ENCODE measurements at regions of chr7 and their contacts with region 1.

Region 1: DNA sequence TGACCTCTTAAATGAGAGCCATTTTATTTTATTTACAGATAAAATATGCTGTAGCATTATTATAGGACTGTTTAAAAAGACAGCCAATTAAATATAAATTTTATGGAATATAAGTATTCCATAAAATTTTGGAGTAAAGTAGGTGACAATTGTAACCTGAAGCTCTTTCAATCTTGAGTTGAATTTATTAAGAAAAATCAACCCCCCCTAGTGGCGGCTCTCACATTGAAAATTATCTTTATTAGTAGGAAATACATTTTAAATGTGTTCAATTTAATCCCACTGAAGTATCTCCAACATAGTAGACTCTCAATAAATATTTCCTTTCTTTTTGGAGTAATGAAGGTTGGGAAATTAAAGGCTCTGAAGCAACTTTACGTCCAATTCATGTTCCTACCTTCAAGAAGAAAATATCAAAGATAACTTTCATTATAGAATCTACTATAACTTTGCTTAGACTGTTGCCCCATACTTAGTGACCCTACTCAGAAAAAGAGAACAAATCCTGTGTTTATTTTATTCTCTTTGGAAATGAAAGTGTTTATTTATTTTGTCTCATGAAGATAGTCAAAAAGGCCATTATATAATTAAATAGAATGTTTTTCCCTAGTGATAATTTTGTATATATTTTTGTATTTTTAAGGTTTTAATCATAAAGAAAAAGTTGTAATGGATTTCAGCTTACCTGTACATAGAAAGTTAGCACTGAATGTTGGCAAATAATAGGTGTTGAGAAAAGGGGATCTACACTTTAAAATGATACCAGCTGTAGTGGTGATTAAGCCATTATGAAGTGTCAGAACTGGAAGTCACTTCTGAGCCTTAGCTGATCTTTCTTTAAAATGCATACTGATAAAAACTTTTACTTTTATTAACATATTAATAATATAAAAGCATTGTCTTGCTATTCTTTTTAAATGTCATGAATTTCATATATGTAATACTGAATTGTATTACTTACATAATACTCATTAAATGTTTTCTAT is 3.3 kb downstream of the AHR start:
- DNase-seq: no peak
- H3K4me3 ChIP-seq: no peak overlapping the region; a peak in 1 of 4 replicates
- H3K27ac ChIP-seq: no peak overlapping the region
- H3K4me1 ChIP-seq: peaks cover 4 to 8% of the 10 kb centered on the region in 2 experiments; a peak in 2 of 4 replicates
- H3K27me3 ChIP-seq: peaks cover 52% of the 10 kb centered on the region
- CTCF ChIP-seq: peak; percentile 94
- EP300 ChIP-seq: no peak
- RAD21 ChIP-seq: peak; percentile 48

Region 2: DNA sequence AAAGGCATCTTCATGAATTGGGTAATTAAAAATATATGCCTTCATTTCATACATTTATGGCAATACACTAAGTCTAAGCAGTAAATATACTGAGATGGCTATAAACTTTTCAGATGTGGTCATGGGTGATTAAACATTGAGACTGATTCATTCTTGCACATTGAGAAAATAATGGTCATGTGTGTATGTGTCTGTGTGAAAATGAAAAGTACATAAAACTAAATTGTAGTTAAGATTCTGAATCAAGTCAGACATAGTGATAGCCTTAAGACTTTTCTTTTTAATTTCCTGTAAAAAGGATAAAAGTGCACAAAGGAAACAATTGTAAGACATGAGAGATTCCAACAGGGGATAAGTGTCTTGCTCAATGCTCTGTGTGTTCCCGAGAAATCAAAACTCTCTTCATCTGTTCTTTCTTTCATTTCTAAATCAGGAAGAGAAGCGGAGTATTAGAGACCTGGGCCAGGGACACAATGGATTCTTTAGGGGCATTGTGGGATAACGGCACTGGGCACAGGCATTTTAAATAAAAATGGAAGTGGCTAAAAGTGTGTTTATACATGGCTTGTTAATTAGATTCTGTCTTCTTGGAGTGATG is 350.2 kb before region 1 on chr7:
- CTCF ChIA-PET with region 1: no interaction called
- POLR2A ChIA-PET with region 1: no interaction called
- DNase-seq: no peak
- H3K4me3 ChIP-seq: no peak overlapping the region
- H3K27ac ChIP-seq: no peak overlapping the region
- H3K4me1 ChIP-seq: no peaks in the 10 kb centered on the region
- H3K27me3 ChIP-seq: peaks cover 25% of the 10 kb centered on the region; the same call in 1 of the 2 replicates
- CTCF ChIP-seq: no peak
- EP300 ChIP-seq: no peak
- RAD21 ChIP-seq: no peak

Region 3: DNA sequence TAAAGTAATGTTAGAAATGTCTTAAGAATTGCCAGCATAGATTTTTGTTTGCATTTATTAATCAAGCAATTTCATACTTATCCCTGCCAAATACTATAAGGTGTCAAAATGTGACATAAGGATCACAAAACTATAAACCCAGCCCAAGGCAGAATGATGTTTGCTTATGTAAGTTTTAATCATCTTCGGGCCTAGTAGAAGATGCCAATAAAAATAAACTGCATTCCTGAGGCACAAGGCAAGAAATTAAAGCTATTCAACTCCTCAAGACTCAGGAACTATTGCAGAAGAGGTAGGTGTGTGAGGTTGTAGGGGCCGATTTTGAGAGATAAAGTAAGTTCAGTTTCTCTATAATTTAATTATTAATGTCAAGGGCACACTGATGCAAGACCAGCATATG is 192.7 kb before region 1 on chr7:
- CTCF ChIA-PET with region 1: no interaction called
- POLR2A ChIA-PET with region 1: no interaction called
- DNase-seq: no peak
- H3K4me3 ChIP-seq: no peak overlapping the region
- H3K27ac ChIP-seq: no peak overlapping the region
- H3K4me1 ChIP-seq: no peaks in the 10 kb centered on the region
- H3K27me3 ChIP-seq: peaks cover 10% of the 10 kb centered on the region; the same call in 1 of the 2 replicates
- CTCF ChIP-seq: no peak
- EP300 ChIP-seq: no peak
- RAD21 ChIP-seq: no peak

Region 4: DNA sequence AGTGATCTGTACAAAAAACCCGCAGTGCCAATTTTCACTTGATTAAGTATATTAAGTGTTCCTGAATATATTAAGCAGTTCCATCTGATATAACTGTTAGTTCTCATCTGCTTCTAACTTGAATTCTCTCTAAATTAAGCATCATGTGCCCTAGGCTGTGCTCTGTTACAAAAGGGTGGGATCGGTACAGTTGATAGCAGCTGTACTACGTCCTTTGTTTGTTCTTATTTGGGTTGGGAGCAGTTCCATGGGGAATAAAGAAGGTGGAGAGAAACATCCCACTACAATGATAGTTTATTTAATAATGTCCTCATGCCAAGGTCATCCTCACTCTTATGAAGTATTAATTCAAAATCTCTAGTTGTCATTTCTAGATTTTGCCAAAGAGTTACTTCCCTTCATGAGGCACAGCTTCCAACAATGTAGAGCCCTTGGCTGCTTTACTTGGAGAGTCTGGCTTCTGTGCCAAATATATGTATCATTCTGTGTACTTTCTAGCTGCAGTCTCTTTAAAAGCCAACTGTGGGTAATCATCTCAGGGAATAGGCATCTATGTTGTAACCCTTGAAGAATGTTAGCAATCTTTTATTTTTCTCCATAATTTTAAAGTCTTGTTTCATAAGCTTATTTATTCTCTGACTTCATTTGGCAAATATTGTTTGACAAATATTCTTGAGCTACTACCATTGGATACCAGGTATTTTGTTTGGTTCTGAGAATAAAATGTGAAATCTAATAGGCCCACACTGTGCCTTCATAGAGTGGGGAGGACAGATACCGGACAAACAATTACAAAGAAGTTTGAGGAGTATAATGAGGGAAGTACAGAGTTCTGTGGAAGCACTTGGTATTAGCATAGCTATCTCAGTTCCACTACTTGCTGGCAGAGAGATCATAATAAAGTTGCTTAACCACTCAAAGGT is 25.8 kb before region 1 on chr7:
- CTCF ChIA-PET with region 1: interaction called, 13 read pairs
- POLR2A ChIA-PET with region 1: no interaction called
- DNase-seq: no peak
- H3K4me3 ChIP-seq: no peak overlapping the region
- H3K27ac ChIP-seq: peak overlapping the region in 1 of 2 experiments; percentile 55; a peak in 2 of 4 replicates
- H3K4me1 ChIP-seq: peaks cover 0 to 17% of the 10 kb centered on the region in 2 experiments; a peak in 1 of 4 replicates
- H3K27me3 ChIP-seq: peaks cover 7% of the 10 kb centered on the region; the same call in 1 of the 2 replicates
- CTCF ChIP-seq: no peak
- EP300 ChIP-seq: peak in 1 of 2 experiments; percentile 51; a peak in 1 of 4 replicates
- RAD21 ChIP-seq: no peak

Region 5: GRCh38 chr7:17331891-17332501 is 30.2 kb after region 1 on chr7:
- CTCF ChIA-PET with region 1: interaction called, 11 read pairs
- POLR2A ChIA-PET with region 1: no interaction called
- DNase-seq: no peak
- H3K4me3 ChIP-seq: no peak overlapping the region
- H3K27ac ChIP-seq: no peak overlapping the region
- H3K4me1 ChIP-seq: no peaks in the 10 kb centered on the region
- H3K27me3 ChIP-seq: peaks cover 10% of the 10 kb centered on the region; the same call in 1 of the 2 replicates
- CTCF ChIP-seq: no peak
- EP300 ChIP-seq: no peak
- RAD21 ChIP-seq: no peak